CD4-positive, alpha-beta T cell (primary cell): ENCODE measurements at regions of chr6 and their contacts with region 1.

Region 1: GRCh38 chr6:31815025-31815838 is at the starts of genes HSPA1A and HSPA1L:
- DNase-seq: peak in 11 of 14 experiments; percentile 25 to 76 (median 60)
- ATAC-seq: peak; percentile 11
- H3K4me3 ChIP-seq: peak within 1 kb of the TSS; percentile 70
- H3K4me3 Mint-ChIP-seq: peak within 1 kb of the TSS; percentile 90
- H3K27ac ChIP-seq: peak within 1 kb of the TSS; percentile 75 to 81
- H3K27ac Mint-ChIP-seq: peak within 1 kb of the TSS; percentile 83
- H3K4me1 ChIP-seq: peaks cover 49% of the 10 kb centered on the region
- H3K4me1 Mint-ChIP-seq: peaks cover 47% of the 10 kb centered on the region
- H3K27me3 ChIP-seq: no peaks in the 10 kb centered on the region
- H3K27me3 Mint-ChIP-seq: no peaks in the 10 kb centered on the region
- CTCF ChIP-seq: no peak
- total RNA-seq, gene HSPA1A: 8.1 to 9.8 TPM
- total RNA-seq, gene HSPA1L: 1.7 to 1.8 TPM

Region 2: DNA sequence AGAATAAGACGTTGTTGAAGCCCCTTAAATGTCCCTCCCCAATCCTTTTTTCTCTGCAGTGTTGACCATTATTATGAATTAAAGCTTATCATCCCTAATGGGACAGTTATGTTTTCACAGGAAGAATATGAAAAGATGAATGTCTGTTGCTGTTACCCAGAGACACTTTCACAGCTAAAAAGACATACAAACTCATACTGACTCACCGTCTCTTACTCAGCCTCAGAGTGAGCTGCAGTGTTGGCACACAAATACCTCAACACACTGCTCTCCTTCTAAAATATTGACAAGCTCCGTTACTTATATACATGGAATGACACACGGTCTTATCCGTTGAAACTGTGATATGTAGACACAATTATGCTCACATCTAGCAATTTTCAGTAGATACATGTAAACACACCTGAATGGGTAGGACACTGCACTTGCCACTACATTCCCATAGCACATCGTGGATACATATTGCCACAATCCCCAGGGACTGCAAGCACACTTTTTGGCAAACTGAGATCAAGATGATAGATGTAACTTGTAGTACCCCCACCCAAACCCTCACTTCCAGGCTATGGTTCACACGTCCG is 62.4 kb before region 1 on chr6:
- CTCF ChIA-PET with region 1: no interaction called
- POLR2A ChIA-PET with region 1: no interaction called
- intact Hi-C with region 1: no loop called
- DNase-seq: no peak
- ATAC-seq: no peak
- H3K4me3 ChIP-seq: no peak overlapping the region
- H3K4me3 Mint-ChIP-seq: no peak overlapping the region
- H3K27ac ChIP-seq: no peak overlapping the region
- H3K27ac Mint-ChIP-seq: no peak overlapping the region
- H3K4me1 ChIP-seq: no peaks in the 10 kb centered on the region
- H3K4me1 Mint-ChIP-seq: no peaks in the 10 kb centered on the region
- H3K27me3 ChIP-seq: no peaks in the 10 kb centered on the region
- H3K27me3 Mint-ChIP-seq: no peaks in the 10 kb centered on the region
- CTCF ChIP-seq: no peak

Region 3: GRCh38 chr6:31763619-31763940 is 51.7 kb before region 1 on chr6:
- CTCF ChIA-PET with region 1: no interaction called
- POLR2A ChIA-PET with region 1: no interaction called
- intact Hi-C with region 1: no loop called
- DNase-seq: no peak
- ATAC-seq: no peak
- H3K4me3 ChIP-seq: no peak overlapping the region
- H3K4me3 Mint-ChIP-seq: no peak overlapping the region
- H3K27ac ChIP-seq: no peak overlapping the region
- H3K27ac Mint-ChIP-seq: no peak overlapping the region
- H3K4me1 ChIP-seq: peaks cover 5% of the 10 kb centered on the region
- H3K4me1 Mint-ChIP-seq: no peaks in the 10 kb centered on the region
- H3K27me3 ChIP-seq: no peaks in the 10 kb centered on the region
- H3K27me3 Mint-ChIP-seq: no peaks in the 10 kb centered on the region
- CTCF ChIP-seq: no peak

Region 4: DNA sequence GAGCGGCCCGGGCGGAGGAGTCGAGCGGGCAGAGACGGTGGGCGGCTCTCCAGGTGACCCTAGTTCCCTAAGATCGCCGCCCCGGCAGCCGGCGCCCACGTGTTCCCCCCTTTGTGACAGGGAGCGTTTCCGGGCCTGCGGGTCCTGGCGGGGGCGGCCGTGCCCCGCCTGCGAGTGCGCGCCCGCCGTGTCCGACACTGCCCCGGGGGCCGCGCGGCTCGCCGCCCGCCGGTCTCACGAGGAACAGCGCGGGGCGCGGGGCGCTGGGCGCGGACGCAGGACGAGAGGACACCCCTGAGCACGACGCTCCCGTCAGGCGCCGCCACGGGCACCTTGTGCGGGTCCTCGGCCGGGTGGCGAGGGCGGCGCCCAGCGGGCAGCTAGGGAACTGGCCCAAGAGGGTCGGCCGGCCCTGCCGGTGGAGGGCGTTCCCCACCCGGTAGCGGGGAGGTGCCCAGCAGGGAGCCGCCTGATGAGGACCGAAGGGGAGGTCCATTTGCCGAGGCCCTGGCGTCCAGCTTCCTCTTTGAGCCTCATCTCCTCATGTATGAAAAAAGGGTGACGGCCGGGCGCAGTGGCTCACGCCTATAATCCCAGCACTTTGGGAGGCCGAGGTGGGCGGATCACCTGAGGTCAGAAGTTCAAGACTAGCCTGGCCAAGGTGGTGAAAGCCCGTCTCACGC is 19.5 kb before region 1 on chr6 and contains the start of gene VARS1:
- CTCF ChIA-PET with region 1: interaction called, 19 read pairs
- POLR2A ChIA-PET with region 1: interaction called, 28 read pairs
- intact Hi-C with region 1: loop called in 1 of 2 experiments (anchors 2 kb)
- DNase-seq: peak; percentile 69 to 94 (median 80)
- ATAC-seq: peak; percentile 79
- H3K4me3 ChIP-seq: peak within 1 kb of the TSS; percentile 77
- H3K4me3 Mint-ChIP-seq: peak within 1 kb of the TSS; percentile 97
- H3K27ac ChIP-seq: peak within 1 kb of the TSS; percentile 81 to 90
- H3K27ac Mint-ChIP-seq: peak within 1 kb of the TSS; percentile 54
- H3K4me1 ChIP-seq: peaks cover 49% of the 10 kb centered on the region
- H3K4me1 Mint-ChIP-seq: peaks cover 38% of the 10 kb centered on the region
- H3K27me3 ChIP-seq: no peaks in the 10 kb centered on the region
- H3K27me3 Mint-ChIP-seq: no peaks in the 10 kb centered on the region
- CTCF ChIP-seq: peak; percentile 76
- total RNA-seq, gene VARS1: 43.9 to 44.2 TPM